Naive thymus-derived CD4-positive, alpha-beta T cell (primary cell): ENCODE measurements at regions of chr2 and their contacts with region 1.

Region 1: DNA sequence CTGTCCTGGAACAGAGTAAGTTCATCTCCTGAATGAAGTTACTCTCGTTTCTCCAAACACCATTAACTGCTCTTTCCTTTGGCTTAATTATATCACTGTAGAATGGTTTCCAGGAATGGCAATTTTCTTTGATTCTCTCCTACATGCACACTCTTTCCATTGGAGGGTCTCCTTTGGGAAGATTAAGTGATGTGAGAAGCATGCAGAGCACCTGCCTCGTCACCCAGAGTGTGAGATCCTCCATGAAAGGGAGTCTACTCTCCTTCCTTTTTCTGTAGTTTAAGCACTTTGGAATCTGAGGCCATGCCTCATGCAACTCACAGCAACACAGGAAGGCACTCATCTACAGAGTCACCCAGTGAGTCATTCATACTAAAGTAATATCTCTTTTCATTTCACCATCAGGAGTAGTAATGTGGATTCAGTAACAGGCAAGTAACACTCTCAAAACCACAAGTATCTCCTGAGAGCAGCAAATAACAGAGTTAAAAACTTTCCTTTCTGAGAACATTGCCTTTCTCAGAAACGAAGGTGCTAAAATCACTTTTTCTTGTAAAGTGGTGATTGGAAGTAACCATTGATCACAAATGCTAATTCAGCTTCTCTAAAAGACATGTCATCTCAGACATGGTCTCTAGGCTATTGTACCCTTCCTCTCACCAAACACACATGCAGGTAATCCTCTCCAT is 52.8 kb upstream of the IL1RL1 start:
- DNase-seq: no peak
- ATAC-seq: peak; percentile 81
- H3K4me3 ChIP-seq: no peak overlapping the region
- H3K4me3 Mint-ChIP-seq: peak overlapping the region in 1 of 10 donors; percentile 86
- H3K27ac ChIP-seq: no peak overlapping the region
- H3K27ac Mint-ChIP-seq: peak overlapping the region in 3 of 9 donors; percentile 19 to 97 (median 54)
- H3K4me1 ChIP-seq: peaks cover 4 to 36% of the 10 kb centered on the region in 2 donors
- H3K4me1 Mint-ChIP-seq: peaks cover 10 to 45% (median 20%) of the 10 kb centered on the region in 7 donors
- H3K27me3 ChIP-seq: no peaks in the 10 kb centered on the region
- H3K27me3 Mint-ChIP-seq: no peaks in the 10 kb centered on the region

Region 2: GRCh38 chr2:101667823-101668222 is 590.7 kb before region 1 on chr2:
- CTCF ChIA-PET with region 1: no interaction called
- POLR2A ChIA-PET with region 1: no interaction called
- intact Hi-C with region 1: no loop called
- DNase-seq: no peak
- ATAC-seq: no peak
- H3K4me3 ChIP-seq: no peak overlapping the region
- H3K4me3 Mint-ChIP-seq: no peak overlapping the region
- H3K27ac ChIP-seq: no peak overlapping the region
- H3K27ac Mint-ChIP-seq: peak overlapping the region in 1 of 9 donors; percentile 74
- H3K4me1 ChIP-seq: no peaks in the 10 kb centered on the region
- H3K4me1 Mint-ChIP-seq: peaks cover 0 to 8% (median 0%) of the 10 kb centered on the region in 7 donors
- H3K27me3 ChIP-seq: no peaks in the 10 kb centered on the region
- H3K27me3 Mint-ChIP-seq: no peaks in the 10 kb centered on the region

Region 3: DNA sequence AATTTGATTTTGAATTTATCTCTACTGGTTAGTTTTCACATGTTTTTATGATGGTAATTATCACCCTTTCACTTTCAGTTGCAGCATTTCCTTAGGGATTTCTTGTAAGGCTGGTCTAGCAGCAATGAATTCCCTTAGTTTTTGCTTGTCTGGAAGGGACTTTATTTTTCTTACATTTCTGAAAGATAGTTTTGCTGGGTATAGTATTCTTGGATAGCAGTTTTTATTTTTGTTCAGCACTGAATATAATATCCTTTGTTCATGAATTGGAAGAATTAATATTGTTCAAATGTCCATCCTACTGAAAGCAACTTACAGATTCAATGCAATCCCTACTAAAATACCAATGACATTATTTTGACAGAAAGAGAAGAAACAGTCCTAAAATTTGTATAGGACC is 41.5 kb before region 1 on chr2:
- CTCF ChIA-PET with region 1: no interaction called
- POLR2A ChIA-PET with region 1: no interaction called
- intact Hi-C with region 1: no loop called
- DNase-seq: no peak
- ATAC-seq: no peak
- H3K4me3 ChIP-seq: no peak overlapping the region
- H3K4me3 Mint-ChIP-seq: no peak overlapping the region
- H3K27ac ChIP-seq: no peak overlapping the region
- H3K27ac Mint-ChIP-seq: no peak overlapping the region
- H3K4me1 ChIP-seq: peaks cover 0 to 3% of the 10 kb centered on the region in 2 donors
- H3K4me1 Mint-ChIP-seq: peaks cover 9 to 19% (median 17%) of the 10 kb centered on the region in 7 donors
- H3K27me3 ChIP-seq: no peaks in the 10 kb centered on the region
- H3K27me3 Mint-ChIP-seq: peaks cover 0 to 5% (median 0%) of the 10 kb centered on the region in 5 donors

Region 4: GRCh38 chr2:102271844-102272243 is 13.3 kb after region 1 on chr2:
- CTCF ChIA-PET with region 1: interaction called, 3 read pairs
- POLR2A ChIA-PET with region 1: no interaction called
- intact Hi-C with region 1: loop called in 1 of 2 experiments (anchors 1 kb)
- DNase-seq: peak in 4 of 9 donors; percentile 16 to 32 (median 26)
- ATAC-seq: peak; percentile 68
- H3K4me3 ChIP-seq: no peak overlapping the region
- H3K4me3 Mint-ChIP-seq: peak overlapping the region in 4 of 10 donors; percentile 5 to 55 (median 28)
- H3K27ac ChIP-seq: no peak overlapping the region
- H3K27ac Mint-ChIP-seq: peak overlapping the region in 3 of 9 donors; percentile 18 to 32 (median 28)
- H3K4me1 ChIP-seq: peaks cover 0 to 10% of the 10 kb centered on the region in 2 donors
- H3K4me1 Mint-ChIP-seq: peaks cover 7 to 54% (median 10%) of the 10 kb centered on the region in 7 donors
- H3K27me3 ChIP-seq: no peaks in the 10 kb centered on the region
- H3K27me3 Mint-ChIP-seq: peaks cover 0 to 22% (median 0%) of the 10 kb centered on the region in 5 donors

Region 5: DNA sequence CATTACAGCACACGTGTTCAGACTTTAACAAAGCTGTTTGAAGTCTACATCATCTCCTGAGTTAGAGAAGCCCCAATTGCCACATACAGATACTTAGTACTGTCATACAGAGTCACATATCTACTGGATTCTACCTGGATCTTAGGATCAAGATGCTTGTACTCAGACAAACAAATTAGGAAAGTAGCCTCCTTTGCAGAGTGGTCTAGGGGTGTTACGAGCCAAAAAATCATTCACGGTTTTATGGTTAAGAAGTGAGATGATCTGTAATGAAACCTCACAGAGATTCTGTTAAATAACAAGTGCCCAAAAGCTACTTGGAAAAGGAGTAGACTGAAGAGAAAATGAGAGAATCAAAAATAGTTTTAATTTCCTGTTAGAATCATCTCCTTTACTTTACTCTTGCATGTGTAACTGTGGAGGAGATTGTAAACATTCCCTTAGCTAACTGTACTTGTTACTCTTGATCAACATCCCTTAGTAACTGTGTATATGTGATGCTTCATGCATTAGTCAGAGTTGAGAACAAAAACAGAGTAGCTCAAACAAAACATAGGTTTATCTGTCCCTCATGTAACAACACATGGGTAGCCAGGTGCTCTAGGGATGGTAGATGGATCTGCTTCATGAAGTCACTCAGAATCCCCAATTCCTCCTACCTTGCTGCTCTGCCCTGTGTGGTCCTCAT is 36.4 kb after region 1 on chr2:
- CTCF ChIA-PET with region 1: no interaction called
- POLR2A ChIA-PET with region 1: no interaction called
- intact Hi-C with region 1: loop called in 1 of 2 experiments (anchors 5 kb)
- DNase-seq: no peak
- ATAC-seq: peak; percentile 37
- H3K4me3 ChIP-seq: no peak overlapping the region
- H3K4me3 Mint-ChIP-seq: no peak overlapping the region
- H3K27ac ChIP-seq: no peak overlapping the region
- H3K27ac Mint-ChIP-seq: peak overlapping the region in 2 of 9 donors; percentile 16 to 55
- H3K4me1 ChIP-seq: no peaks in the 10 kb centered on the region
- H3K4me1 Mint-ChIP-seq: peaks cover 0 to 55% (median 4%) of the 10 kb centered on the region in 7 donors
- H3K27me3 ChIP-seq: no peaks in the 10 kb centered on the region
- H3K27me3 Mint-ChIP-seq: peaks cover 0 to 15% (median 0%) of the 10 kb centered on the region in 5 donors

Region 6: GRCh38 chr2:102418421-102418961 is 160.0 kb after region 1 on chr2:
- CTCF ChIA-PET with region 1: no interaction called
- POLR2A ChIA-PET with region 1: no interaction called
- intact Hi-C with region 1: loop called in 1 of 2 experiments (anchors 1 kb)
- DNase-seq: peak in 6 of 9 donors; percentile 24 to 59 (median 49)
- ATAC-seq: peak; percentile 85
- H3K4me3 ChIP-seq: peak overlapping the region; percentile 18
- H3K4me3 Mint-ChIP-seq: peak overlapping the region; percentile 38 to 87 (median 74)
- H3K27ac ChIP-seq: no peak overlapping the region
- H3K27ac Mint-ChIP-seq: peak overlapping the region in 7 of 9 donors; percentile 64 to 95 (median 78)
- H3K4me1 ChIP-seq: peaks cover 29 to 49% of the 10 kb centered on the region in 2 donors
- H3K4me1 Mint-ChIP-seq: peaks cover 27 to 67% (median 48%) of the 10 kb centered on the region in 7 donors
- H3K27me3 ChIP-seq: no peaks in the 10 kb centered on the region
- H3K27me3 Mint-ChIP-seq: no peaks in the 10 kb centered on the region